ENCODE measurements at regions of chr14 and their contacts with region 1.

Region 1: DNA sequence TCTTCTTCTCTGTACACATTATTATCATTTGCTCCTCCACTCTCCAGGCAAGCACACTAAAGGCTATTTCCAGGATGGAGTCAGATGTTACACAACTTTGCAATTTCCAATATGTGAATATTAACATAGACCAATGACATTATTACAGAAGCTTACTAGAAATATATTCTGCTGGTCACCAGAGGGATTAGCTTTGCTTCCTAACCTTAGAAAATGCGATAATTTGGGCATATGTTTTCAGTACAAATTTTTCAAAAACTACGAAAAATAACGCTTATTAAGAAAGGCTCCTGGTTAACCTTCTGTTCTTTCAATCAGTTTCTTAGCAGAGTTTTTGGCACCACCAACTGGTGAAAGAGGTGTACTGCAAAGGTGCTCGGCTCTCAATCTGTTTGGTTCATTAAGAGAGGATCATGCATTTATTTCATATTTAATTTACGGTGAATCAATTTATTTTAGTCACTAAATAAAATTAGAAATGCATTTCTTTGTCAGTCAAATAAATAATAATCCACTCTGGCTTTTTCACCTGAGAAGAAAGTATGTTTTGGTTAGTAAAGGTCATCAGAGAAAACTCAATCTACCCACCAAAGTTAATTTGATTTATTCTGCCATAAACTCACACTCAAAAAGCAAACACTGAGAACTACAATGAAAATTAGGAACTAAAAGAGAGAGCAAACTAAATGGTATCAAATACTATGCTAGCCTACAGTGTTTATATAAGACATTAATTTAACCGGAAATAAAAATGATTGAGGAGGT is 39.2 kb downstream of the EFCAB11 start:
- DNase-seq: peak; percentile 60
- CTCF ChIP-seq: peak; percentile 84

Region 2: GRCh38 chr14:89027097-89027740 is 888.1 kb before region 1 on chr14:
- in situ Hi-C with region 1: loop called (anchors 10 kb)
- DNase-seq: peak; percentile 92
- CTCF ChIP-seq: peak; percentile 91

Region 3: DNA sequence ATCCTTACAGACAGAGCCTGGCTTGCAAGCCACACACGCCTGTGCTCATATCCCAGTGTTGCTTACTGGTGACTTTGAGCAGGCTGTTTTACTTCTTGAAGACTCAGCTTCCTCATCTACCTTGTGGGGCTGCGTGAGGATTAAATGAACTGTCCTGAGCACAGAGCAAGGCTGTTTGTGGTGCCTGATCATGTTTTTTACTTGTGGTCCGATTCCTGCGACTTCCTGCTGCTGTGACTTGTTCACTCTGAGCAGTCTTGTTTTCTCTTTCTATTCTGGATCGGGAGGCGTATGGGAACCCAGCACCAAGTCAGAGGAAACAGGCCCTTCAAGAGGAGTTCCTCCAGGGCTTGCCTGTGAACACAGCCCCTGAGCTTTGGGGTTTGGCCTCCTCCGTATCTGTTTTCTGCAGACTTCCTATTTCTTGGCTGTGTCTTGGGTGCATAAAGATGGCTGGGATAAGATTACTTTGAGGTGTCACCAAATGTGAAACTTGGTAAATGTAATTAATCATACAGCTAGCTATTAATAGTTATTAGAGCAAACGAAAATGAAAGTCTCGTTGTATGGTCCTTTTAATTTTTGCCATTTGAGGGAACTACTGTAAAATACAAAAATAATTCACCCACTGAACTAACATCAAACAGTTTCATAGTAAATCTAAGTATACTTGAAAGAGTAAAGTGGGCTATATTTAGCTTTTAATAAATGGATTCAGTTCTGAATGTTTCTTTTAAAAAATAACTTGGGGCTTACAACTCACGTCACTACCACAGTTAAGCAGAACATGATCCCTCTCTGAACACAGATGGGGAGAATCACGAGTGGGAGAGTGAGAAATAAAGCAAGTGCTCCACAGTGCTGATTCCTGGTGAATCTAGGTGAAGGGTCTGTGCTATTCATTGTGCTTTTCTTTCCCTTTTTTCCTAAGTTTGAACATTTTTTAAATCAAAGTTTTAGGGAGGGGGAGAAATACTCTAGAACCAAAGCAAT is 749.8 kb before region 1 on chr14:
- in situ Hi-C with region 1: loop called (anchors 25 kb)
- DNase-seq: peak; percentile 52
- CTCF ChIP-seq: no peak

Region 4: DNA sequence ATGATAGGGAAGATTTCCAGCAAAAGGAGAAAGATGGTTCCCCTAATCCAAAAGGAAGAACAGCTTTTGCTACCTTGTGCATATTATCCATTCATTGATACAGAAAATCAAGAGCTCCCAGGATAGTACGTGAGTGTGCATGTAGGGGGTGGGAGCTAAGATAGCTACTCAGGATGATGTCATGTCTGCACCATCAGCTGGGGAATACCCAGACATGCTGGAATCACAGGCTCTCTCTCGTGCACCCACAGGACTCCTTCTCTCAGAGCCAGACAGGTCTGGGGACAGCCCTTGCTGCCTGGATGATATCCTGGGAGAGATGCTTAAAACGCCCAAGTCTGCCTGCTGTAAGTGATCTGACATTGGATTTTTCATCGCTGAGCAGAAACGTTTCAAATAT is 537.2 kb before region 1 on chr14:
- in situ Hi-C with region 1: no loop called
- DNase-seq: peak; percentile 61
- CTCF ChIP-seq: no peak

Region 5: GRCh38 chr14:89430391-89431236 is 484.7 kb before region 1 on chr14:
- in situ Hi-C with region 1: loop called (anchors 10 kb)
- DNase-seq: peak; percentile 84
- CTCF ChIP-seq: no peak